ENCODE measurements at regions of chr4 and their contacts with region 1.

Region 1: DNA sequence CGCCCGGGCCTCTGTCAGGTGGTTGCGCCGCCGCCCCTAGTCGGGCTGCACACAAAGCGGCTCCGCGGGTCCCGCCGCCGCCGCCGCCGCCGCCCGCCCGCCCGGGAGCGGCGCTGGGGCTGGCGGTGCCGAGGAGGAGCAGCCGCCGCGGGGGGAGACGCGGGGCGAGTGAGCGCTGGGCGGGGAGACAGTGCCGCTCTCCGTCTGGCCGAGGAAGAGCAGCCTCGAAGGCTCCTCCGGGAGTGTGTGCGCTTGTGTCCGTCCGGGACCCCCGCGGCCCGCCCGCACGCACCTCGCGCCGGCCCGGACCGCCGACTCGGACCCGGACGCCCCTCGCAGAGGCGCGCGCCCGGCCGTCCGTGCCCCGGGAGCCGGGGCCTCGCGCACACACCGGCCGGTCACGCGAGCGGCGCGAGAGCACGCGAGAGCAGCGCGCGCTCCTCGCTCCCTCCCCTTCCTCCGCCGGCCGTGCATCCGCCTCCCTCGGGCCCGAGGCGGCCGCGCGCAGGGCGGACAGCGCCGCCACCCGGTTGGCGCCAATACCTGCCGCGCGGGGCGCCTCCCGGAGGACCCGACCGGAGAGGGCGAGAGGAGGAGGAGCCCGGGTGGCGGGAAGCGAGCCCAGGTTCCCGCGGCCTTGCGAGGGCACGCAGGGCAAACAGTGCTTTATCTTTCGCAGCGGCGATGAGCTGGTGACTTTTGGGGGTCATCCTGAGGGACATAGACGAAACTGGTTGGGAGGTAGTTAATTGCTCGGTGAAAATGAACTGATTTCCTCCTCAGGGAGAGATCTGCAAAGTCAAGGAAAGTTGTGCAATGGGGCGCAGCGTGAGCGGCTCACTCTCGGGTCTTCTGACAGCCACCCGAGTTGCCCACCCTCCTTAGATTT is at the start of gene PDS5A:
- DNase-seq: peak; percentile 83 to 95 (median 91)
- ATAC-seq: peak; percentile 94
- H3K4me3 ChIP-seq: peak within 1 kb of the TSS; percentile 78
- H3K4me3 Mint-ChIP-seq: peak within 1 kb of the TSS; percentile 87 to 99 (median 91)
- H3K27ac ChIP-seq: peak within 1 kb of the TSS; percentile 89
- H3K27ac Mint-ChIP-seq: peak within 1 kb of the TSS; percentile 91 to 98 (median 96)
- H3K4me1 ChIP-seq: peaks cover 3 to 18% of the 10 kb centered on the region in 2 donors
- H3K4me1 Mint-ChIP-seq: peaks cover 28 to 43% (median 31%) of the 10 kb centered on the region in 7 donors
- H3K27me3 ChIP-seq: no peaks in the 10 kb centered on the region
- H3K27me3 Mint-ChIP-seq: no peaks in the 10 kb centered on the region
- total RNA-seq, gene PDS5A: 92.7 to 102 (median 98.5) TPM

Region 2: GRCh38 chr4:39365830-39366771 is 611.6 kb before region 1 on chr4 and contains the start of gene RFC1:
- CTCF ChIA-PET with region 1: no interaction called
- POLR2A ChIA-PET with region 1: no interaction called
- intact Hi-C with region 1: loop called in 1 of 2 experiments (anchors 5 kb)
- DNase-seq: peak; percentile 84 to 92 (median 91)
- ATAC-seq: peak; percentile 98
- H3K4me3 ChIP-seq: peak within 1 kb of the TSS; percentile 69
- H3K4me3 Mint-ChIP-seq: peak within 1 kb of the TSS; percentile 88 to 98 (median 94)
- H3K27ac ChIP-seq: peak within 1 kb of the TSS; percentile 84
- H3K27ac Mint-ChIP-seq: peak within 1 kb of the TSS; percentile 72 to 97 (median 92)
- H3K4me1 ChIP-seq: peaks cover 12 to 19% of the 10 kb centered on the region in 2 donors
- H3K4me1 Mint-ChIP-seq: peaks cover 33 to 59% (median 41%) of the 10 kb centered on the region in 7 donors
- H3K27me3 ChIP-seq: no peaks in the 10 kb centered on the region
- H3K27me3 Mint-ChIP-seq: no peaks in the 10 kb centered on the region
- total RNA-seq, gene RFC1: 62.4 to 66.4 (median 64.3) TPM

Region 3: DNA sequence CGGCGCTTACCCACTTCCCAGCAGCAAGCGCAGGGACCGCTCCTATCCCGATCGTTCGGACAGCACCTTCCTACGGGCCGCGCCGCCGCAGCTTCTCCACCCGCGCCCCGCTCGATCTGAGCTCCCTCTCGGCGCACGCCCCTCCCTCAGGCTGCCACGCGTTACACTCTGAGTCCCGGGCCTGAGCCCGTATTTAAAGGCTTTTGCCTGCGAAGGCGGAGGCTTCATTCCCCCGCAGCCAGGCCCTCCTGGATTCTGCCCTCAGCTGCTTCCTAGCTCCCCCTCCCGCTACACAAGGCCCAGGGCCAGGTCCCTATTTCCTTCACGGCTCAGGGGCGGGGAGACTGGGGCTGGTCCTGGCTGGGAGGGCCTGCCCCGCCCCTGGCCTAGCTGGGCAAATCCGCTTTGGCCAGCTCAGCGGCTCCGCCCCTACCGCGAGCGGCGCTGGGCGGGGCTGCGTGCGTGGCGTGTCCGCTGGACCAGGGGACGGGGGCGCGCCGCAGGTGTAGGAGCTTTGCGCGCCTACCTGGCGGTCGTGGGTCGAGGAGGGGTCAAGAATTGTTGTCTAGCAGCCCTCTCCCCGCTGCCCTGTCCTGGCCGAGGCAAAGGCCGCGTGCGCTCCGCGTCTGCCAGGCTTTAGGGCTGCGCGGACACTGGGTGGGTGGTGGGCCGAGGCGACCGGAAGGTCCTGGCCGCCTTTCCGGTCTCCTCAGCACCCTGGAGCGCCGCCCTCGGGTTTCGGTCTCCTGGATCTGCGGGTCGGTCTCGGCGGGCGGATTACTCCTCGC is 450.3 kb before region 1 on chr4 and contains the start of gene UGDH:
- CTCF ChIA-PET with region 1: interaction called, 3 read pairs
- POLR2A ChIA-PET with region 1: no interaction called
- intact Hi-C with region 1: loop called (anchors 1 kb)
- DNase-seq: peak; percentile 85 to 95 (median 88)
- ATAC-seq: peak; percentile 99
- H3K4me3 ChIP-seq: peak within 1 kb of the TSS; percentile 81
- H3K4me3 Mint-ChIP-seq: peak within 1 kb of the TSS; percentile 88 to 99 (median 98)
- H3K27ac ChIP-seq: peak within 1 kb of the TSS; percentile 74
- H3K27ac Mint-ChIP-seq: peak within 1 kb of the TSS; percentile 84 to 97 (median 93)
- H3K4me1 ChIP-seq: peaks cover 7 to 10% of the 10 kb centered on the region in 2 donors
- H3K4me1 Mint-ChIP-seq: peaks cover 11 to 26% (median 19%) of the 10 kb centered on the region in 7 donors
- H3K27me3 ChIP-seq: no peaks in the 10 kb centered on the region
- H3K27me3 Mint-ChIP-seq: no peaks in the 10 kb centered on the region
- total RNA-seq, gene UGDH: 6.9 to 20.9 (median 17.7) TPM

Region 4: GRCh38 chr4:39754309-39754708 is 223.4 kb before region 1 on chr4:
- CTCF ChIA-PET with region 1: no interaction called
- POLR2A ChIA-PET with region 1: no interaction called
- intact Hi-C with region 1: loop called in 1 of 2 experiments (anchors 5 kb)
- DNase-seq: no peak
- ATAC-seq: no peak
- H3K4me3 ChIP-seq: no peak overlapping the region
- H3K4me3 Mint-ChIP-seq: no peak overlapping the region
- H3K27ac ChIP-seq: no peak overlapping the region
- H3K27ac Mint-ChIP-seq: peak overlapping the region in 3 of 9 donors; percentile 4 to 41 (median 28)
- H3K4me1 ChIP-seq: no peaks in the 10 kb centered on the region
- H3K4me1 Mint-ChIP-seq: peaks cover 6 to 19% (median 9%) of the 10 kb centered on the region in 7 donors
- H3K27me3 ChIP-seq: no peaks in the 10 kb centered on the region
- H3K27me3 Mint-ChIP-seq: no peaks in the 10 kb centered on the region

Region 5: DNA sequence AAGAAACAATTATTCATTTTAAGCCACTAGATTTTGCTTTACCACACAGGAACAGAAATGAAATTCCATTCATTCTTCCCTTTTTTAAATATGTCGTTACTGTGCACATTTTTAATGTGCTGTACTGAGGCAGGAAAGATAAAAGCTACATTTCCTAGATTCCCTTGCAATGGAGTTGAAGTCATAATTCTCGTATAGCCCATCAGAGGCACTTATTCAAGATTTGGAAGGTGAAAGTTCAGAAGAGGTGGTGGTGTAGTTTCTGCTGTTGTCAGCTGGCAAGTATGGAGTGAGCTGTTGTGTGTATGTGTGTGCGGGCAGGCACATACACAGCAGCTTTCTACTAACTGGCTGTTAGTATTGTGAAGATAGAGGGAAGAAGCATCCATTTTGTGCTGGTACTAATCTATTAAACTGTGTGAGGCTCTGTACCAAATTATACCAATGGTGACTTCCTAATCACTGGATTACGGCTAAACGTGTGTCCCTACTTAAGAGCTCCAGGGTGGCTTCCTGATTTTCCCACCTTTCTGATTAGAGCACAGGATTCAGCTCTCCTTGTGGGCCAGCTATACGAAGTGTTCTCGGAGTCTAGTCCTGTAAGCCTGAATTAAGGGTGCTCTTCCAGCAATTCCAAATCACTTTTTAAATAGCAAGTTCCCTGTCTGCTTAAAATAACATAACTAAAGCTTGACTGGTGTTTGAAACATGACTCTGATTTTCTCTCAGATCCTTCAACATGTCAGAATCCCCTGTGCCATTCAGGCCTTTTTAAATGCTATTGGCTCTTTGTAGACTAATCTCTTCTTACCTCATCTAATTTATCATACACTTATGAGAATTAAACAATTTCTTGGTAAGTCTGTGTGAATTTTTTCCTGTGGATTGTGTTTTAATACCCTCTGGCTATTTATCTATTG is 43.8 kb before region 1 on chr4:
- CTCF ChIA-PET with region 1: interaction called, 4 read pairs
- POLR2A ChIA-PET with region 1: no interaction called
- intact Hi-C with region 1: loop called (anchors 2 to 5 kb)
- DNase-seq: no peak
- ATAC-seq: no peak
- H3K4me3 ChIP-seq: no peak overlapping the region
- H3K4me3 Mint-ChIP-seq: peak overlapping the region in 8 of 10 donors; percentile 0 to 63 (median 36)
- H3K27ac ChIP-seq: no peak overlapping the region
- H3K27ac Mint-ChIP-seq: peak overlapping the region; percentile 18 to 84 (median 58)
- H3K4me1 ChIP-seq: peaks cover 15 to 37% of the 10 kb centered on the region in 2 donors
- H3K4me1 Mint-ChIP-seq: peaks cover 28 to 75% (median 67%) of the 10 kb centered on the region in 7 donors
- H3K27me3 ChIP-seq: no peaks in the 10 kb centered on the region
- H3K27me3 Mint-ChIP-seq: no peaks in the 10 kb centered on the region

Region 6: DNA sequence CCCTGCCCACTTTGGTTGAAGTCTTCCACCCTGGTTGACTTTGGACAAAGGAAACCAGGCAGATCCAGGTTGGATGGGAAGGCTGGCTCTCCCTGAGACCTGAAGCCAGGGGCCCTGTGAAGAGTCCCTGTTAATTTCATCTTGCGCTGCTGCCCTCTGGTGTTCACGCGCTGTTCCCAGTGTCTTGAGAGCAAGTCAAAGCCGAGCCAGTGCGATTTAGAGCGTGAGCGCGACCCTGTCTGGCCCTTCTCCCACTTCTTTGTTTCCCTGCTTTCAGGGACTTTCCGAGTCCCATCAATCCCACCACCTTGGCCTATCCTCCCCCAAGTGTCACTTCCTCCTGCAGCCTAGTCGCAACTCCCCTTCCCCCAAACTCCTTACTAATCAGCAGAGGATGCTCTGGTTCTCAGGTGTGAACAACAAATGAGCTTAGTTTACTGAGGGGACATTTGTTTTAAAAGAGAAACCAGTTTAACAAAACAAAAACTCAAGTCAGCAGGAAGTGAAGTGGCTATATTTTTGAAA is 331.6 kb after region 1 on chr4:
- CTCF ChIA-PET with region 1: no interaction called
- POLR2A ChIA-PET with region 1: no interaction called
- intact Hi-C with region 1: loop called in 1 of 2 experiments (anchors 5 kb)
- DNase-seq: peak; percentile 75 to 89 (median 86)
- ATAC-seq: peak; percentile 79
- H3K4me3 ChIP-seq: peak overlapping the region; percentile 35
- H3K4me3 Mint-ChIP-seq: peak overlapping the region; percentile 67 to 91 (median 78)
- H3K27ac ChIP-seq: peak overlapping the region; percentile 87
- H3K27ac Mint-ChIP-seq: peak overlapping the region; percentile 94 to 100 (median 99)
- H3K4me1 ChIP-seq: peaks cover 50 to 81% of the 10 kb centered on the region in 2 donors
- H3K4me1 Mint-ChIP-seq: peaks cover 61 to 97% (median 90%) of the 10 kb centered on the region in 7 donors
- H3K27me3 ChIP-seq: no peaks in the 10 kb centered on the region
- H3K27me3 Mint-ChIP-seq: no peaks in the 10 kb centered on the region

Region 7: GRCh38 chr4:40897557-40898203 is 919.9 kb after region 1 on chr4:
- CTCF ChIA-PET with region 1: no interaction called
- POLR2A ChIA-PET with region 1: no interaction called
- intact Hi-C with region 1: loop called in 1 of 2 experiments (anchors 10 kb)
- DNase-seq: peak; percentile 20 to 69 (median 42)
- ATAC-seq: peak; percentile 74
- H3K4me3 ChIP-seq: no peak overlapping the region
- H3K4me3 Mint-ChIP-seq: peak overlapping the region; percentile 6 to 84 (median 76)
- H3K27ac ChIP-seq: no peak overlapping the region
- H3K27ac Mint-ChIP-seq: peak overlapping the region in 3 of 9 donors; percentile 34 to 72 (median 38)
- H3K4me1 ChIP-seq: no peaks in the 10 kb centered on the region
- H3K4me1 Mint-ChIP-seq: peaks cover 0 to 5% (median 4%) of the 10 kb centered on the region in 7 donors
- H3K27me3 ChIP-seq: no peaks in the 10 kb centered on the region
- H3K27me3 Mint-ChIP-seq: no peaks in the 10 kb centered on the region

Measured in naive thymus-derived CD4-positive, alpha-beta T cell (primary cell).